HepG2 (cell line): ENCODE measurements at regions of chr5 and their contacts with region 1.

Region 1: DNA sequence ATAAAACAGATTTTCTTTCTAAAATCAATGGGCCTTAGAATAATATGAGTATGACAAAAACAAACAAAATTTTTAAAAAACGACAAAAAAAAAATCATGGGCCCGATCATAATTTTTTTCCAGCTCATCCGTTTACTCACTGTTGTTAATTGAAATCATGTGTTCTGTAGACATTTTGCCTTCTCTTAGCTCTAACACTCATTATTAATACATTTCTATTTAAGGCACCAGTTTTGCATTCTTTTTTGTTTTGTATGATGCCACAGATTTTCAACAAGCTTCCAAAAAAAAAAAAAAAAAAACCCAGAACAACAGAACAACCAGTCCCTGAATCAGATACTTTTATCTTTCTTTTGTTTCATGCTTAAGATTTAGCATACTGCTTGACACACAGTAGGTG is 86.4 kb downstream of the PRLR start:
- DNase-seq: no peak
- ATAC-seq: no peak
- H3K4me3 ChIP-seq: no peak overlapping the region
- H3K27ac ChIP-seq: no peak overlapping the region
- H3K4me1 ChIP-seq: no peaks in the 10 kb centered on the region
- H3K27me3 ChIP-seq: no peaks in the 10 kb centered on the region
- CTCF ChIP-seq: no peak
- EP300 ChIP-seq: no peak
- POLR2A ChIP-seq: no peak
- RAD21 ChIP-seq: no peak

Region 2: DNA sequence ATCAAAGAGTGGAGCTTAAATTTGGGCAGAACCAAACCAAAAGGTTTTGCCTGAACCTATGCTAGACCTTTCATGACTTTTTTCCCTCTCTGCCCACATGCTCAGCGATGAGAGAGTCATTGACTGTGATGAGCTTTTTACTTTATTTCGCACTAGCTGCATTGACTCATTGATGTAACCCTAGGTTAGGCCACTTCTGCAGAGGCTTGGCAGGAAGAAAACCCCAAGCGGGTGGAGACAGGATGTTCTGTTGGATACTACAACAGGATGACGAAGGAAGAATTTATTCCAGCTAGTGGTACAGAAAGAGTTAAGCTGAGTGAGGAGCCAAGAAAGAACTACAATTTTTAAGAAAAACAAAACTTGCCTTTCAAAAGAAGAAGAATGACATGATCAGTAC is 114.5 kb before region 1 on chr5:
- CTCF ChIA-PET with region 1: no interaction called
- POLR2A ChIA-PET with region 1: no interaction called
- in situ Hi-C with region 1: no loop called
- intact Hi-C with region 1: no loop called
- DNase-seq: no peak
- ATAC-seq: no peak
- H3K4me3 ChIP-seq: no peak overlapping the region
- H3K27ac ChIP-seq: no peak overlapping the region
- H3K4me1 ChIP-seq: peaks cover 28% of the 10 kb centered on the region
- H3K27me3 ChIP-seq: no peaks in the 10 kb centered on the region; a peak in 1 of 5 replicates
- CTCF ChIP-seq: no peak
- EP300 ChIP-seq: no peak
- POLR2A ChIP-seq: no peak
- RAD21 ChIP-seq: no peak

Region 3: GRCh38 chr5:35046774-35047173 is 97.1 kb before region 1 on chr5:
- CTCF ChIA-PET with region 1: no interaction called
- POLR2A ChIA-PET with region 1: no interaction called
- in situ Hi-C with region 1: no loop called
- intact Hi-C with region 1: no loop called
- DNase-seq: no peak
- ATAC-seq: 0 out of 3 replicates have a peak, but pooled peaks have one; percentile 25
- H3K4me3 ChIP-seq: no peak overlapping the region
- H3K27ac ChIP-seq: no peak overlapping the region
- H3K4me1 ChIP-seq: peaks cover 52% of the 10 kb centered on the region
- H3K27me3 ChIP-seq: no peaks in the 10 kb centered on the region
- CTCF ChIP-seq: no peak
- EP300 ChIP-seq: no peak
- POLR2A ChIP-seq: no peak
- RAD21 ChIP-seq: no peak

Region 4: DNA sequence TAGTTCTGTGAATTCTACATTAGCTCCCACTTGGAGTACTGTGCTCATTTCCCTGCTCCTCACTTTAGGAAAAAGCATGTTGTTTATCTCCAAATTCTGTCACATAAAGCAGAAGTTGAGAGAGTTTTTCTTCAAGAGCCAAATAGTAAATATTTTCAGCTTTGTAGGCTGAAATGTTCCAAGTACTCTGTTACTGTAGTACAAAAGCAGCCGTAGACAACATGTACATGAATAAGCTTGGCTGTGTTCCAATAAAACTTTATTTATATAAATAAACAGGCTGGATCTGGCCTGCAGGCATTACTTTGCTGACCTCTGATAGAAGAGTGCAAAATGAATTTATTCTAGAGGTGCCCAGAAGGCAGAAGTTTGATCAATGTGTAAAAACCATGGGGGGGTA is 23.1 kb before region 1 on chr5:
- CTCF ChIA-PET with region 1: no interaction called
- POLR2A ChIA-PET with region 1: no interaction called
- in situ Hi-C with region 1: no loop called
- intact Hi-C with region 1: loop called (anchors 1 kb)
- DNase-seq: no peak
- ATAC-seq: no peak
- H3K4me3 ChIP-seq: no peak overlapping the region
- H3K27ac ChIP-seq: no peak overlapping the region
- H3K4me1 ChIP-seq: peaks cover 49% of the 10 kb centered on the region
- H3K27me3 ChIP-seq: no peaks in the 10 kb centered on the region
- CTCF ChIP-seq: no peak
- EP300 ChIP-seq: no peak
- POLR2A ChIP-seq: no peak
- RAD21 ChIP-seq: no peak